ENCODE measurements at regions of chr22 and their contacts with region 1.

Region 1: GRCh38 chr22:41800348-41801146 is at the start of gene CCDC134:
- H3K4me3 Mint-ChIP-seq: peak within 1 kb of the TSS; percentile 96
- H3K27ac Mint-ChIP-seq: peak within 1 kb of the TSS; percentile 90
- H3K4me1 Mint-ChIP-seq: peaks cover 45% of the 10 kb centered on the region
- H3K27me3 Mint-ChIP-seq: no peaks in the 10 kb centered on the region

Region 2: GRCh38 chr22:41746567-41747400 is 53.8 kb before region 1 on chr22:
- intact Hi-C with region 1: loop called (anchors 2 kb)
- H3K4me3 Mint-ChIP-seq: no peak overlapping the region
- H3K27ac Mint-ChIP-seq: no peak overlapping the region
- H3K4me1 Mint-ChIP-seq: peaks cover 7% of the 10 kb centered on the region
- H3K27me3 Mint-ChIP-seq: peaks cover 27% of the 10 kb centered on the region

Region 3: GRCh38 chr22:41780746-41781505 is 19.6 kb before region 1 on chr22:
- intact Hi-C with region 1: loop called (anchors 1 kb)
- H3K4me3 Mint-ChIP-seq: peak overlapping the region; percentile 64
- H3K27ac Mint-ChIP-seq: peak overlapping the region; percentile 82
- H3K4me1 Mint-ChIP-seq: peaks cover 51% of the 10 kb centered on the region
- H3K27me3 Mint-ChIP-seq: no peaks in the 10 kb centered on the region

Measured in dendritic cell treated with granulocyte-macrophage colony-stimulating factor and Interleukin-4, amounts not matched to agents 40 ng/mL and 50 ng/mL, for 4 days (primary cell).